Gastrocnemius medialis (tissue), 4 donors: ENCODE measurements at regions of chr2 and their contacts with region 1.

Region 1: DNA sequence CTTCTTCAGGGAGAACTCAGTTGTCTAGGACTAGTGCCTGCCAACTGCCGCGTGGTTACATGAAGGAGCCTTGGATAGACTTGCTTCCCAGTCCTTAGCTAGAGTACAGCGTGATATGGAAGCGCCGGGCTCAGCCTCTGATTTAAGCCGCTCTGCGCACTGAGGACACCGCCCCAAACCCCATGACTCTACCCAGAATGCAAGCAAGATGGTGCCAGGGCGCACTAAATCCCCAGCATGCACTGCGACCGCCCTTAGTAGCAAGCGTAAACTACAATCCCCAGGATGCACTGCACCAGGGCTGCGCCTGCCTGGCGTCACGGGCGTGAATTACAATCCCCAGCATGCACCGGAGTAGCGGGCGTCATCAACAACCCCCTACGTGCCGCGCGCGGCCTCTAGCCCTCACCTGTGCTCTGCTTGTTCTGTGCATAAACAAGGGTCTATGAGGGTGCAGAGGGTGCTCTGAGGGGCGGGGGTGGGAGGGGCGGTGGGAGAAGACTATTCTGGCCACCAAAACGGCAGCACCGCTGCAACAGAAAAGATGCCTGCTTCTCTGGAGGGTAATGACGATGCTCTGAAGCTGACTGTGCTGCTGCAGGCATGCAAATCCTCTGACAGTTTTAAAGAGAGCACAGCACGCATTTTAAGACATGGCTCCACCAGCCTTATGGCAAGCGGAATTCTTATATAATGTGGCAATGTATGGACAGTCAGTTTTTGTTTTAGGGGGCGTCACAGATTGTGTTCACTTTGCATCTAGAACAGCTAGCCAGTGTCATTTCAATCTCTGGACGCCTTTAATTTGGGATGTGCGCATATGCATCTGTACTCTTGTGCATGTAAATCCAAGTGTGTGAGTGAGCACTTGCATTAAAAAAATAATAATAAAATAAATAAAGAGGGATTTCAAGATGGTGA is 282.5 kb upstream of the MYT1L start:
- DNase-seq: peak; percentile 90 to 96
- ATAC-seq: peak; percentile 99 to 100
- H3K4me3 ChIP-seq: peak overlapping the region; percentile 52 to 61 (median 56)
- H3K27ac ChIP-seq: peak overlapping the region; percentile 81 to 87 (median 86)
- H3K4me1 ChIP-seq: peaks cover 0 to 6% of the 10 kb centered on the region in 2 donors
- H3K27me3 ChIP-seq: no peaks in the 10 kb centered on the region
- CTCF ChIP-seq: peak in 2 of 5 experiments; percentile 17 to 22
- POLR2A ChIP-seq: peak; percentile 68 to 74

Region 2: DNA sequence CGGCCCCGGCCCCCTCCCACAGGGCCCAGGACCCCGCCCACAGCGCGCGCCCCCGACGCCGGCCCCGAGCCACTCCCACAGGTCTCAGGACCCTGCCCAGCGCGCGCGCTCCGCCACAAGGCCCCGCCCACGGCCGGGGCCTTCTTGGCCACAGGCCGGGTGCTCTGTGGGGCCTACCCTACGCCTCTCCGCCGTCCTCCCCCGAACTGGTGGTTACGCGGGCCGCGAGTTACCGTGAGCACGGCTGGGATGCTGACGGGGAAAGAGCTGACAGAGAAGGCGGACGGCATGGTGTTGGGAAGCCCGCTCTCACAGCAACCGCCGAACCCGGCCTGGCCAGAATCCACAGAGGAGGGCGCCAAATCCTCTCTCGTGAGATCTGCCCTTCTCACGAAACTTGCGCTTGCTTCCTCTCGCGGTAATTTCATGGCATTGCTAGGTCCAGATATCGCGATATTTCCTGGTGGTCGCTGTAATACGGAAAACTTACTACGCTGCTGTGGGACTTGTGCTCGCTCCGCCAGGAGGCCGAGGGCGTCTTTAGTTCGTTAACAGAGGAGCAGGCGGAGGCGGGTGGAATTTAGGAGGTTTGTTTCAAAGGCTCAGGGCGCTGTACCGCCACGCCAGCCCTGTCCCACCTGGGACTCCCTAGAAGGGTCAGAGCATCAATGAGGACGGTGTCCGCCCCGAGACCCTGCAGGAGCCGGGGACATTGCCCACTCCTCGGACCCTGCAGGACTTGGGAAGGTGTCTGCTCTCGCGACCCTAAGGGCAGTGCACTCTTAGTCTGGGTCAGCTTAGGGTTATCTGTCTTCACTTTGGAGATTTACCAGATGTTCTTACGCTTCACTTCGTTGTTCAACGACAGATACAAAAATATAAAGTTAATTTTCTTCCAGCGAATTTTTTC is 1936.2 kb before region 1 on chr2 and contains the start of gene TMEM18:
- in situ Hi-C with region 1: no loop called
- intact Hi-C with region 1: loop called (anchors 5 kb)
- DNase-seq: peak; percentile 89 to 92
- ATAC-seq: peak; percentile 89 to 90
- H3K4me3 ChIP-seq: peak within 1 kb of the TSS; percentile 80 to 95 (median 91)
- H3K27ac ChIP-seq: peak within 1 kb of the TSS; percentile 91 to 99 (median 94)
- H3K4me1 ChIP-seq: peaks cover 4 to 22% of the 10 kb centered on the region in 2 donors
- H3K27me3 ChIP-seq: no peaks in the 10 kb centered on the region
- CTCF ChIP-seq: peak in 3 of 5 experiments; percentile 5 to 30 (median 11)
- POLR2A ChIP-seq: peak; percentile 73 to 78
- total RNA-seq, gene TMEM18: 9.0 to 26.1 (median 12.3) TPM

Region 3: DNA sequence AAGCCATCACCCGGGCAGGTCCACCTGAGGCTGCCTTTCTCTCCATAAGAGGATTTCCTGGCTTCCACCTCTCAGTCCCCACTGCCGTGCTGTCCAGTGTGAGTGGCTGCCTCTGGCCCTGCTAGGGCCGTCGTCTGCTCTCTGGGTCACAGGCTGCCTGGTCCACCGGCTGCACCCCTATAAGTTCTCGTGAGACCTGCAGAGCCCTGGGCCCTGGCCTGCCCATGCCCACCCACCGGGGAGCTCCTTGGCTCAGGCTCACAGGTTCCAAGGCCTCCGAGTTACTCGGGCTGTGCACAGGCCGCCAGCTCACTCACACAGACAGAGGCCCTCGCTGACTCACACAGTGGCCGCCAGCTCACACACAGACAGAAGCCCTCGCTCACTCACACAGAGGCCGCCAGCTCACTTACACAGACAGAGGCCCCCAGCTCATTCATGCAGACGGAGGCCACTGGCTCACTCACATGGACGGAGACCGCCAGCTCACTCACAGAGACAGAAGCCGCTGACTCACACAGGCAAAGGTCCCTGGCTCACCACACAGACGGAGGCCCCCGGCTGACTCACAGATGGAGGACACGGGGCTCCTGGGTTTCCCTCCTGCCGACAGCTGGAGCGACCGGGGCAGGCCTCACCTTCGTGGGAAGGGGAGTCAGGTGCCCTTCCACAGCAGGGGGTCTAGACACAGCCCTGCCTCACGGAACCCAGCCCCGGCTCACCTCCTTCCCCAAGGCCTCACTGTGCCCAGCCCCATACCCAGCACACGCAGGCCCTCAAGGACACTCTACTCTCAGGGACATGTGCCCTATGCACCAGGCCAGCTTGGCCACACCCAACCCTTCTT is 51.7 kb after region 1 on chr2:
- in situ Hi-C with region 1: no loop called
- intact Hi-C with region 1: loop called (anchors 5 kb)
- DNase-seq: peak in 1 of 2 donors; percentile 28
- ATAC-seq: no peak
- H3K4me3 ChIP-seq: no peak overlapping the region
- H3K27ac ChIP-seq: no peak overlapping the region
- H3K4me1 ChIP-seq: peaks cover 19 to 27% of the 10 kb centered on the region in 2 donors
- H3K27me3 ChIP-seq: no peaks in the 10 kb centered on the region
- CTCF ChIP-seq: no peak
- POLR2A ChIP-seq: no peak

Region 4: DNA sequence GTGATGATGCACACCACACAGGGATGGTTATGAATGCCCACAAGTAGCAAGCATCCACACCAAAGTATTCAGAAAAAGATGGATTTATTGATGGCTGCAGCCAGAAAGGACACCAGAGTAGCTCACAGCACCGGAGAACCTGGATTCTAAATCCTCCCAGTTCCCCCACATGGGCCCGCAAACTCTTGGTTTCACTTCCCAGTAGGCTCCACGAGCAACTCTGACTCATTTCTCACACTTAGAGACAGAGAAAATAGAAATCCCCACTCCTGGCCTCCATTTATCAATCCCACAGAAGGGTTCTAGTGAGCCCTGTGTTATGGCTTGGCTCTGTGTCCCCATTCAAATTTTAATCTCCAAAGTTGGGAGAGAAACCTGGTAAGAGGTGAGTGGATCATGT is 144.2 kb after region 1 on chr2:
- in situ Hi-C with region 1: no loop called
- intact Hi-C with region 1: no loop called
- DNase-seq: no peak
- ATAC-seq: no peak
- H3K4me3 ChIP-seq: no peak overlapping the region
- H3K27ac ChIP-seq: no peak overlapping the region
- H3K4me1 ChIP-seq: peaks cover 3 to 5% of the 10 kb centered on the region in 2 donors
- H3K27me3 ChIP-seq: no peaks in the 10 kb centered on the region
- CTCF ChIP-seq: no peak
- POLR2A ChIP-seq: no peak

Region 5: GRCh38 chr2:2769481-2770431 is 156.2 kb after region 1 on chr2:
- in situ Hi-C with region 1: no loop called
- intact Hi-C with region 1: loop called (anchors 1 kb)
- DNase-seq: peak; percentile 89 to 95
- ATAC-seq: peak; percentile 99 to 100
- H3K4me3 ChIP-seq: peak overlapping the region in 3 of 4 donors; percentile 9 to 38 (median 13)
- H3K27ac ChIP-seq: peak overlapping the region; percentile 82 to 94 (median 87)
- H3K4me1 ChIP-seq: peaks cover 12 to 16% of the 10 kb centered on the region in 2 donors
- H3K27me3 ChIP-seq: no peaks in the 10 kb centered on the region
- CTCF ChIP-seq: peak; percentile 35 to 66 (median 59)
- POLR2A ChIP-seq: peak; percentile 35 to 55

Region 6: DNA sequence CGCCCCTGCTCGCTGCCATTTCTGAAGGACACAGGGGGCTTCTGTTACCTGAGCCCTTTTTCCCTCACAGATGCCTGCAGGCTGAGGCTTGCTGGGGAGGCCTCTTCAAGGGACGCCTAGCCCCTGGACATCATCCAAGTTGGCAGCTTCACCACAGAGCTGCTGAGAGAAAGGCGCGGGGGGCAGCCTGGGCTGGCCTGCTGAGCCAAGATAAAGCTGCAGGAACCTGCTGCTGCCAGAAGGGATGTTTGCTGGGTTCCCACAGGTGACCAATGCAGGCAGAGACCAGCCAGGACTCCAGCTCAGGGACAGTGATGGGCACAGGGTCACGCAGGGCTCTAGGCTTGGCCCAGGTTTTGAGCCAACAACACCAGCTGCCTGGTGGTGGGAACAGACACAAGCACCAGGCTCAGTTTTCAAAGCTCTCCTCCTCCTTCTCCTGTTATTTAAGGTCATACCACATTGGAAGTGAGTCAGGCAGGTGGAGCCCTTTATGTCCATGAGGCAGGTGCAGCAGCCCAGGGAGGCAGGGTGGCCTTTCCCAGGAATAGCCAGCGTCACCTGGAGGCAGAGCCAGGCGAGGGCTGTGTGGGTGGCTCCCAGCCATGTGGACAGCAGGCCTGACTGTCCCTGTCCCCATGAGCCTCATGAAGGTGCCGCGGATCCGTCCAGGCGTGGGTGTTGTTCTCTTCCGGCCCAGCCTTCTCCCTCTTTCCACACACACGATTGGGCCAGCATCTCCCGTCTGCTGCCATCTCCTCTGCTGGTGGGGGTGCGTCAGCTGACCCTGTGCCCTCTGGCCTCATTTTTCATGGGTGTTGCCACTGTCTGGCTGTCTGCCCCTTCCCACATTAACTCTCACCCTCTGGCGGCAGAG is 233.0 kb after region 1 on chr2:
- in situ Hi-C with region 1: no loop called
- intact Hi-C with region 1: loop called (anchors 2 kb)
- DNase-seq: peak; percentile 86 to 95
- ATAC-seq: peak; percentile 83 to 88
- H3K4me3 ChIP-seq: peak overlapping the region in 1 of 4 donors; percentile 32
- H3K27ac ChIP-seq: peak overlapping the region; percentile 88 to 93 (median 92)
- H3K4me1 ChIP-seq: peaks cover 20 to 21% of the 10 kb centered on the region in 2 donors
- H3K27me3 ChIP-seq: no peaks in the 10 kb centered on the region
- CTCF ChIP-seq: peak in 1 of 5 experiments; percentile 17
- POLR2A ChIP-seq: peak in 1 of 2 donors; percentile 29